CD8-positive, alpha-beta T cell (primary cell): ENCODE measurements at regions of chr1 and their contacts with region 1.

Region 1: DNA sequence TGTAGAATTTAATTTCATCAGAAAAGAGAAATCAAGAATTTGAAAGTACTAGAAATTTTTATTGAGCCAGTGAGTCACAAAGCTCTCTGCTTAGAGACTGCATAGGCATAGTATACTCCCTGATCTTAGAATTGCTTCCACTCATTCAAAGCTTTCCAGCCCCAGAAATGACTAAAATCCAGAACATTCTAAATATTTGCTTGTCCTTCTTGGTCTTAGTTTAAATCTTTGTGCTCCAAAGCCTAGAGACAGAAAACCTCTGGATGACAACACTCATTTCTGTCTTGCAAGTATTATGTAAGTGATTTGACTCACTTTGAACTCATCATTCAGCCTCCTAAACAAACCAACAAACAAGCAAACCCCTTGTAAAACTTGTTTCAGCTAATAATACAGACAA is 74.2 kb downstream of the PTPRC start:
- DNase-seq: no peak
- ATAC-seq: no peak
- H3K4me3 ChIP-seq: no peak overlapping the region
- H3K4me3 Mint-ChIP-seq: no peak overlapping the region
- H3K27ac ChIP-seq: peak overlapping the region in 1 of 2 experiments; percentile 38
- H3K27ac Mint-ChIP-seq: peak overlapping the region; percentile 38
- H3K4me1 ChIP-seq: peaks cover 9% of the 10 kb centered on the region
- H3K4me1 Mint-ChIP-seq: peaks cover 54% of the 10 kb centered on the region
- H3K27me3 ChIP-seq: no peaks in the 10 kb centered on the region
- H3K27me3 Mint-ChIP-seq: no peaks in the 10 kb centered on the region
- CTCF ChIP-seq: no peak

Region 2: DNA sequence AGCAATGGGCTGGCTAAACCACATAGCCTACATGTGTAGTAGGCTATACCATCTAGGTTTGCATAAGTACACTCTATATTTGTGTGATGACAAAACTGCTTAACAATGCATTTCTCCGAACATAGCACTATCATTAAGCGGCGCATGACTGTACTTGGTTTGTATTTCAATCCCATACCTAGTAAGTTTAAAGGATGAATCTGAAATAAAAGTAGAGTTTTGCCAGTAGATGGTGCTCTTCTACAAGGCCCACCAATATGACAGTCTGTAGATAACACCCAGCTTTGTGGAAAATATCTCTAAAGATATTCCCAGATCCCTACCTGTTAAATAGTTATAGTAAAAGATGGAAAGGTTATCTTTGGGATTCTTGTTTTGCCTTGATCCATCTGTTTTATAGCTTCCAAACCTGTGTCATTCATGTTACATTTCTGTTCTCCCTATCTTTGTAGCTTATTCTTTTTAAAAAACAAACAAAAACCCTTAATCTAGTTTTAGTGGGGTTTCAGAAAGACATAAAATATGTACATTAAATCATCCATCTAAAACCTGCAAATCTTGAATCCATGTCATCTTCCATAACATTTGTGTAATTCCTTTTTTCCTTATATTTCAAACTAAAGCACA is 1532.7 kb before region 1 on chr1:
- CTCF ChIA-PET with region 1: no interaction called
- POLR2A ChIA-PET with region 1: no interaction called
- intact Hi-C with region 1: loop called in 1 of 2 experiments (anchors 10 kb)
- DNase-seq: peak in 2 of 9 experiments; percentile 40 to 59
- ATAC-seq: peak; percentile 62
- H3K4me3 ChIP-seq: no peak overlapping the region
- H3K4me3 Mint-ChIP-seq: no peak overlapping the region
- H3K27ac ChIP-seq: no peak overlapping the region
- H3K27ac Mint-ChIP-seq: no peak overlapping the region
- H3K4me1 ChIP-seq: no peaks in the 10 kb centered on the region
- H3K4me1 Mint-ChIP-seq: peaks cover 13% of the 10 kb centered on the region
- H3K27me3 ChIP-seq: no peaks in the 10 kb centered on the region
- H3K27me3 Mint-ChIP-seq: no peaks in the 10 kb centered on the region
- CTCF ChIP-seq: peak; percentile 66

Region 3: DNA sequence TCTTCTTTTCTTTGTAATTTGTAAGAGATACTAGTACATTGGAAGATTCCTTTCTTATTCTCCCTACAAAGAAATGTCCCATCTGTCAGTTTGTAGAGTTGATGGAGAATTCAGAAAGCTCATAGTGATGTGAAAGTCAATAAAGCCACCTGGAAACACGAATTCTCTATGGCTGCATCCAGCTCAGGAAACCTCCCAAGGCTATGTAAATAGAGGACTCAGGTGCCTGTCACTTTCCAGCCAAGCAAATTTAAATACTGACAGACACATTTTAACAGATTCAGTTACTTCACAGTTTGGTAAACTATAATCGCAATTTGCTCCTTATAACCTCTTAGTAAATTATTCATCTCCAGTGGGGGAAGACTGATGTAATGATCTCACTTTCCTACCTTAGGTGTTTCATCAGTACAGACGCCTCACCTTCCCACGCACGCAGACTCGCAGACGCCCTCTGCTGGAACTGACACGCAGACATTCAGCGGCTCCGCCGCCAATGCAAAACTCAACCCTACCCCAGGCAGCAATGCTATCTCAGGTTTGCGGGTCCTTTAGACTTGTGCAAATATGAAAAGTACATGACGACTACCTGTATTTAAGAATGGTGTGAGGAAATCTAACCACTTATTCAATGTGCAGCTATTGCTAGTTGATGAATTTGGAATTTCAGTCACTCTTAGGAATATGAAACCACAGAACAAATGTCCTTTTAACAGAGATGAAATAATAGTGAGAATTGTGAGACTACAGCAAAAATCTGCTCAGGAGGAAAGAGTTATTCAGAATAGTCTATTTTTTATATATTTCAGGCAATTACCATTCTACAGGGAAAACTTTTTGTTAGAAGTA is 13.7 kb before region 1 on chr1:
- CTCF ChIA-PET with region 1: interaction called, 6 read pairs
- POLR2A ChIA-PET with region 1: interaction called, 5 read pairs
- intact Hi-C with region 1: loop called in 1 of 2 experiments (anchors 2 kb)
- DNase-seq: peak; percentile 45 to 82 (median 73)
- ATAC-seq: peak; percentile 86
- H3K4me3 ChIP-seq: no peak overlapping the region
- H3K4me3 Mint-ChIP-seq: peak overlapping the region; percentile 8
- H3K27ac ChIP-seq: no peak overlapping the region
- H3K27ac Mint-ChIP-seq: peak overlapping the region; percentile 72
- H3K4me1 ChIP-seq: peaks cover 71% of the 10 kb centered on the region
- H3K4me1 Mint-ChIP-seq: peaks cover 83% of the 10 kb centered on the region
- H3K27me3 ChIP-seq: no peaks in the 10 kb centered on the region
- H3K27me3 Mint-ChIP-seq: no peaks in the 10 kb centered on the region
- CTCF ChIP-seq: peak; percentile 52

Region 4: GRCh38 chr1:198734323-198735008 is 21.4 kb after region 1 on chr1:
- CTCF ChIA-PET with region 1: no interaction called
- POLR2A ChIA-PET with region 1: interaction called, 3 read pairs
- intact Hi-C with region 1: loop called in 1 of 2 experiments (anchors 2 kb)
- DNase-seq: no peak
- ATAC-seq: no peak
- H3K4me3 ChIP-seq: no peak overlapping the region
- H3K4me3 Mint-ChIP-seq: no peak overlapping the region
- H3K27ac ChIP-seq: peak overlapping the region in 1 of 2 experiments; percentile 26
- H3K27ac Mint-ChIP-seq: peak overlapping the region; percentile 49
- H3K4me1 ChIP-seq: peaks cover 32% of the 10 kb centered on the region
- H3K4me1 Mint-ChIP-seq: peaks cover 69% of the 10 kb centered on the region
- H3K27me3 ChIP-seq: no peaks in the 10 kb centered on the region
- H3K27me3 Mint-ChIP-seq: no peaks in the 10 kb centered on the region
- CTCF ChIP-seq: no peak

Region 5: DNA sequence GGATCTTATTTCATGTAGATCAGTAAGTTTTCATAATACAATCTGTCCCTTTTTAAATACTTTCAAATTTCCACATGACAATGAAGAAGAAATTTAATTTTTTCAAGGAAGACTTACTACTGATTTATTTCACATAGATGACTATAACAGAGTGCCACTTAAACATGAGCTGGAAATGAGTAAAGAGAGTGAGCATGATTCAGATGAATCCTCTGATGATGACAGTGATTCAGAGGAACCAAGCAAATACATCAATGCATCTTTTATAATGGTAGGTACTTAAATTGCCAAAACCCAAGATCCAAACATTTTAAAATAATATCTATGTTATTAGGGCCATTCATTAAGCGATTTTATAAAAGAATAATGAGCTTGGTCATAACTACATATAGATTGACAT is 36.2 kb after region 1 on chr1:
- CTCF ChIA-PET with region 1: no interaction called
- POLR2A ChIA-PET with region 1: no interaction called
- intact Hi-C with region 1: loop called (anchors 2 to 5 kb)
- DNase-seq: no peak
- ATAC-seq: no peak
- H3K4me3 ChIP-seq: no peak overlapping the region
- H3K4me3 Mint-ChIP-seq: no peak overlapping the region
- H3K27ac ChIP-seq: no peak overlapping the region
- H3K27ac Mint-ChIP-seq: peak overlapping the region; percentile 15
- H3K4me1 ChIP-seq: peaks cover 29% of the 10 kb centered on the region
- H3K4me1 Mint-ChIP-seq: peaks cover 19% of the 10 kb centered on the region
- H3K27me3 ChIP-seq: no peaks in the 10 kb centered on the region
- H3K27me3 Mint-ChIP-seq: no peaks in the 10 kb centered on the region
- CTCF ChIP-seq: no peak

Region 6: GRCh38 chr1:200323918-200324317 is 1610.8 kb after region 1 on chr1:
- CTCF ChIA-PET with region 1: no interaction called
- POLR2A ChIA-PET with region 1: no interaction called
- intact Hi-C with region 1: no loop called
- DNase-seq: no peak
- ATAC-seq: no peak
- H3K4me3 ChIP-seq: no peak overlapping the region
- H3K4me3 Mint-ChIP-seq: no peak overlapping the region
- H3K27ac ChIP-seq: no peak overlapping the region
- H3K27ac Mint-ChIP-seq: no peak overlapping the region
- H3K4me1 ChIP-seq: no peaks in the 10 kb centered on the region
- H3K4me1 Mint-ChIP-seq: no peaks in the 10 kb centered on the region
- H3K27me3 ChIP-seq: peaks cover 0 to 2% of the 10 kb centered on the region in 2 experiments
- H3K27me3 Mint-ChIP-seq: peaks cover 2% of the 10 kb centered on the region
- CTCF ChIP-seq: no peak